ENCODE measurements at regions of chr1 and their contacts with region 1.

Region 1: GRCh38 chr1:41282679-41283317 is 40.7 kb upstream of the SCMH1 start:
- H3K4me3 ChIP-seq: no peak overlapping the region
- H3K27ac ChIP-seq: no peak overlapping the region
- H3K4me1 ChIP-seq: no peaks in the 10 kb centered on the region
- CTCF ChIP-seq: peak; percentile 68

Region 2: GRCh38 chr1:41152622-41153044 is 130.2 kb before region 1 on chr1:
- CTCF ChIA-PET with region 1: no interaction called
- POLR2A ChIA-PET with region 1: no interaction called
- H3K4me3 ChIP-seq: no peak overlapping the region
- H3K27ac ChIP-seq: no peak overlapping the region
- H3K4me1 ChIP-seq: no peaks in the 10 kb centered on the region
- CTCF ChIP-seq: no peak

Region 3: GRCh38 chr1:41272601-41273000 is 10.2 kb before region 1 on chr1:
- CTCF ChIA-PET with region 1: interaction called, 11 read pairs
- POLR2A ChIA-PET with region 1: no interaction called
- H3K4me3 ChIP-seq: no peak overlapping the region
- H3K27ac ChIP-seq: no peak overlapping the region
- H3K4me1 ChIP-seq: no peaks in the 10 kb centered on the region
- CTCF ChIP-seq: no peak

Region 4: DNA sequence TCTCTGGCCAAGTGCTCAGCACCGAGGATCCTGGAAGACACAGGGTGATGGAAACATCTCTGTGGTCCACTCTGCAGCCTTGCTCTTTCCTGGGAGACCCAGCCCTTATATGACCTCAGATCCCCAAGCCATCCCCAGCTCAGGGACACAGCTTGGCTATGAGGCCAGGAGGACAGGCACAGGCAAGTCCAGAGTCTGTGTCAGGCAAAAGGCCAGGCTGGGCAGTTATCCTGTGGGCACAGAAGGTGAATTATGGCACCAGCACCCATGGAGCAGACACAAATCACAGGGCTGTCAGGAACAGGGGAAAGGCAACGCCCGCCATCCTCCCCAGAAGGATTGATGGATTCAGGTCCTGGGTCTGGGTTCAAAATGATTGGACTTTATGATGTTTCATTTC is 11.4 kb after region 1 on chr1:
- CTCF ChIA-PET with region 1: interaction called, 50 read pairs
- POLR2A ChIA-PET with region 1: no interaction called
- H3K4me3 ChIP-seq: no peak overlapping the region
- H3K27ac ChIP-seq: no peak overlapping the region
- H3K4me1 ChIP-seq: no peaks in the 10 kb centered on the region
- CTCF ChIP-seq: no peak

Region 5: DNA sequence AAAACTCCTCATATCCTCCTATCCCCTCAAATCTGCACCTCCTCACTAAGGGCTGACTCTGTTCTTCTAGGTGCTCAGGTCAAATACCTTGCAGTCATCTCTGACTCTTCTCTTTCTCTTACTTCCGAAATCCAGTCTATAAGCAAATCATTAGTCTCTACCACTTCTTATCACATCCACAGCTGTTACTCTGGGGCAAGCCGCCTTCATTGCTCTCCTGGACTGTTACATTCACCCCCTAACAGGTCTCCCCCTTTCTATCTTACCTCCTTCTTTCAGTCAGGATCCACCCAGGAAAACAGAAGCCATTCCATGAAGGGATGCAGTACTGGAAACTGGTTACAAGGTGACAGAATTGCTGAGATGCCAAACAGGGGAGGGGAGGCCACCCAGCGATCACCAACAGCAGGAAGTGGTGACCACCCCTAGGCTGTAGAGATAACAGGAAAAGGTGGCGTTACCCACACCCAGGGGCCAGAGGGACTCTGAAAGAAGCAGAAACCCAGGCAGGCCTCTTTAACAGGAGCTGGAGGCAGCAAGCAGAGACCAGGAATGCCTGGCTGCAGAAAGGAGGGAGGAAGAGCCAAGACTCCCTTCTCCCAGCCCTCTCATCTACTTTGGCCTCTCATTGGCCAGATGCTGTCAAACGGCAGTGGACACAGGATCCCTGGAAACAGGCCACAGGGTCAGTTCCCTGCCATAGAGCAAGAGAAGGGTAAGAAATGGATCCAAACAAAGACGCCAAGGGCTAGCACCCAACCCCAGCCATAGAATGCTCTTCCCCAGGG is 23.0 kb after region 1 on chr1:
- CTCF ChIA-PET with region 1: interaction called, 20 read pairs
- POLR2A ChIA-PET with region 1: no interaction called
- H3K4me3 ChIP-seq: no peak overlapping the region
- H3K27ac ChIP-seq: no peak overlapping the region
- H3K4me1 ChIP-seq: no peaks in the 10 kb centered on the region
- CTCF ChIP-seq: no peak

Region 6: DNA sequence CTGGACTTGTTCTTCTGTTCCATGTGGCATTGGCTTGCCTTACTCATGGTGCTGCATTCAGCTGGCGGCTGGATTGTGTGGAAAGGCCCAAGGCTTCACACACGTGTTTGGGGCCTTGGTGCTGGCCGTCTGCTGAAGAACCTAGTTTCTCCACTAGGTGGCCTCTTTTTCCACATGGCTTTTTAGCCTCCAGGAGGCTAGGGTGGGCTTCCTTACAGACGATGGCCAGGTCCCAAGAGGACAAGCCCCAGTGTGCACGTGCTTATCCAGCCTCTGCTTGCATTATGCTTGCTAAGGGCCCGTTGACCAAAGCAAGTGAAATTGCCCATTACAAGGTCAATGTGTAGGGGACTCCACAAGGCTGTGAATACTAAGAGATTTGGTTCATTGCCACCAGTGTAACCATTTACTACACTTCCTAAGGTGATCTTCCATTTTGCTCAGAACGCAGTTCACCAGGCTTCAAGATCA is 30.9 kb after region 1 on chr1:
- CTCF ChIA-PET with region 1: interaction called, 20 read pairs
- POLR2A ChIA-PET with region 1: no interaction called
- H3K4me3 ChIP-seq: no peak overlapping the region
- H3K27ac ChIP-seq: no peak overlapping the region
- H3K4me1 ChIP-seq: no peaks in the 10 kb centered on the region
- CTCF ChIP-seq: no peak

Region 7: DNA sequence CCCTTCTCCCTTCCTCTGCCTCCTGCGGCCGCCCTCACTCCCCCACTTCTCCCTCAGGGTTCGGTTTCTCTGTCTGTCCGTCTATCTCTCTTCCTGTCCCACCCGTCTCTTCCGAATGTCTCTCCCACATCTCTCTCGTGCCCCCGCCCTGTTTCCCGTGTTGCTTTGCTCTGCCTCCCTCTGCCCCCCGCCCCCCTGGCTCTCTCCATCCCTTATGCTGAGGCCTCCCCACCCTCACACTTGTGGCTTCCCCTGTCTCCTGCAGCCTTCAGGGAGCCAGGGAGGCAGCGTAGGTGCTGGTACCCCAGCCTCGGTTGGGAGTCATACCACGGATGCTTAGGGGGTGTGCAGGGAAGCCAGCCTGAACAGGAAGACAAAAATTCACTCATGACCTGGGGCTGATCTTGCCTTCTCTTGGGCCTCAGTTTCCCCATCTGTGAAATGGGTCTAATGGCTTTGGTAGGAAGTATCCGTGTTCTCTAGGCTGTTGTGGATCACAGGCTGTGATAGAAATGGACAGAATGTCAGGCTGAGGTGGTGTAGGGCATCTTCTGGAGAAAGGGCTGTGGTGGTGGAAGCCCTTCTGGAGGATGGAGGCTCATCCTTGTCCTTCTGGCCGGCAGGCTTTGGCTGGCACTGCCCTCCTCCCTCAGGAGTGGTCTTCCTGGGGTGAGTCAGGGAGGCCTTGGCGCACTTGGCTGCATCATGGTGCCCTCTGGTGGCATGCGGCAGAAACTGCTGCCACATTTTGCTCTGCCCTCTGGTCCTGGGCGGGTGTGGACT is 133.9 kb after region 1 on chr1:
- CTCF ChIA-PET with region 1: interaction called, 77 read pairs
- POLR2A ChIA-PET with region 1: no interaction called
- H3K4me3 ChIP-seq: no peak overlapping the region
- H3K27ac ChIP-seq: no peak overlapping the region
- H3K4me1 ChIP-seq: no peaks in the 10 kb centered on the region
- CTCF ChIP-seq: peak; percentile 93

Measured in HEK293 (cell line).